Stomach (tissue), 19 donors: ENCODE measurements at regions of chr6 and their contacts with region 1.

Region 1: GRCh38 chr6:44104481-44105021 is 22.7 kb downstream of the MRPL14 start:
- DNase-seq: peak in 1 of 2 donors; percentile 69
- H3K4me3 ChIP-seq: no peak overlapping the region
- H3K27ac ChIP-seq: peak overlapping the region in 3 of 5 donors; percentile 26 to 65 (median 30)
- H3K4me1 ChIP-seq: peaks cover 4 to 22% (median 12%) of the 10 kb centered on the region in 4 donors
- H3K27me3 ChIP-seq: no peaks in the 10 kb centered on the region
- CTCF ChIP-seq: no peak
- EP300 ChIP-seq: no peak
- POLR2A ChIP-seq: no peak

Region 2: GRCh38 chr6:44142835-44143234 is 38.3 kb after region 1 on chr6:
- intact Hi-C with region 1: loop called (anchors 5 kb)
- DNase-seq: no peak
- H3K4me3 ChIP-seq: no peak overlapping the region
- H3K27ac ChIP-seq: no peak overlapping the region
- H3K4me1 ChIP-seq: no peaks in the 10 kb centered on the region
- H3K27me3 ChIP-seq: no peaks in the 10 kb centered on the region
- CTCF ChIP-seq: no peak
- EP300 ChIP-seq: no peak
- POLR2A ChIP-seq: no peak